CD4-positive, alpha-beta memory T cell (primary cell): ENCODE measurements at regions of chr18 and their contacts with region 1.

Region 1: DNA sequence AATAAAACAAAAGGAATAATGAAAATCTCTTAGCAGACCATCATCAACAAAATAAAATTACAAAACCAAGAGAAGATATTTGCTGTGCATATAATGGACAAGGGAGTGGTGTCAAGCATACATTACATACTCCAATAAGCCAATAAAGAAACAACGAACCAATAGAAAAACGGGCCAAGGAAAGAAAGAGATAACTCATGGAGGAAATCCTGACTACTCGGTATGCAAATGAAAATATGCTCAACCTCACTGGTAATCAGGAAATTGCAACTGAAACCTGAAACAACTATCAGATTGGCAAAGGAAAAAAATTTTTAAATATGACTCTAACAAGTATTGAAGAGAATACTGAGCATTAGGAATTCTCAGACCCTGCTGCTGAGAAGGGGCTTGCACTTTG is 84.7 kb downstream of the BCL2 start:
- DNase-seq: no peak
- H3K4me3 ChIP-seq: no peak overlapping the region
- H3K4me3 Mint-ChIP-seq: peak overlapping the region; percentile 16 to 80 (median 59)
- H3K27ac ChIP-seq: peak overlapping the region; percentile 21
- H3K27ac Mint-ChIP-seq: peak overlapping the region; percentile 53 to 92 (median 84)
- H3K4me1 ChIP-seq: peaks cover 49% of the 10 kb centered on the region
- H3K4me1 Mint-ChIP-seq: peaks cover 53 to 83% (median 67%) of the 10 kb centered on the region in 4 donors
- H3K27me3 ChIP-seq: no peaks in the 10 kb centered on the region
- H3K27me3 Mint-ChIP-seq: no peaks in the 10 kb centered on the region

Region 2: GRCh38 chr18:63253428-63254372 is 18.9 kb after region 1 on chr18:
- CTCF ChIA-PET with region 1: no interaction called
- POLR2A ChIA-PET with region 1: interaction called, 3 read pairs
- intact Hi-C with region 1: loop called (anchors 2 kb)
- DNase-seq: no peak
- H3K4me3 ChIP-seq: no peak overlapping the region
- H3K4me3 Mint-ChIP-seq: peak overlapping the region in 7 of 8 donors; percentile 3 to 83 (median 66)
- H3K27ac ChIP-seq: peak overlapping the region; percentile 4
- H3K27ac Mint-ChIP-seq: peak overlapping the region; percentile 37 to 83 (median 79)
- H3K4me1 ChIP-seq: peaks cover 77% of the 10 kb centered on the region
- H3K4me1 Mint-ChIP-seq: peaks cover 56 to 87% (median 68%) of the 10 kb centered on the region in 4 donors
- H3K27me3 ChIP-seq: no peaks in the 10 kb centered on the region
- H3K27me3 Mint-ChIP-seq: no peaks in the 10 kb centered on the region

Region 3: GRCh38 chr18:63282793-63283192 is 48.0 kb after region 1 on chr18:
- CTCF ChIA-PET with region 1: no interaction called
- POLR2A ChIA-PET with region 1: no interaction called
- intact Hi-C with region 1: no loop called
- DNase-seq: no peak
- H3K4me3 ChIP-seq: no peak overlapping the region
- H3K4me3 Mint-ChIP-seq: no peak overlapping the region
- H3K27ac ChIP-seq: no peak overlapping the region
- H3K27ac Mint-ChIP-seq: no peak overlapping the region
- H3K4me1 ChIP-seq: peaks cover 65% of the 10 kb centered on the region
- H3K4me1 Mint-ChIP-seq: peaks cover 40 to 56% (median 48%) of the 10 kb centered on the region in 4 donors
- H3K27me3 ChIP-seq: no peaks in the 10 kb centered on the region
- H3K27me3 Mint-ChIP-seq: no peaks in the 10 kb centered on the region

Region 4: GRCh38 chr18:63311118-63312018 is 76.5 kb after region 1 on chr18:
- CTCF ChIA-PET with region 1: interaction called, 3 read pairs
- POLR2A ChIA-PET with region 1: interaction called, 12 read pairs
- intact Hi-C with region 1: no loop called
- DNase-seq: no peak
- H3K4me3 ChIP-seq: no peak overlapping the region
- H3K4me3 Mint-ChIP-seq: peak overlapping the region in 7 of 8 donors; percentile 26 to 92 (median 69)
- H3K27ac ChIP-seq: peak overlapping the region; percentile 14
- H3K27ac Mint-ChIP-seq: peak overlapping the region; percentile 51 to 94 (median 80)
- H3K4me1 ChIP-seq: peaks cover 96% of the 10 kb centered on the region
- H3K4me1 Mint-ChIP-seq: peaks cover 61 to 96% (median 82%) of the 10 kb centered on the region in 4 donors
- H3K27me3 ChIP-seq: no peaks in the 10 kb centered on the region
- H3K27me3 Mint-ChIP-seq: no peaks in the 10 kb centered on the region

Region 5: GRCh38 chr18:63363951-63364350 is 129.1 kb after region 1 on chr18:
- CTCF ChIA-PET with region 1: no interaction called
- POLR2A ChIA-PET with region 1: no interaction called
- intact Hi-C with region 1: no loop called
- DNase-seq: peak; percentile 65 to 82 (median 74)
- H3K4me3 ChIP-seq: no peak overlapping the region
- H3K4me3 Mint-ChIP-seq: peak overlapping the region; percentile 3 to 48 (median 6)
- H3K27ac ChIP-seq: no peak overlapping the region
- H3K27ac Mint-ChIP-seq: peak overlapping the region; percentile 11 to 89 (median 48)
- H3K4me1 ChIP-seq: peaks cover 39% of the 10 kb centered on the region
- H3K4me1 Mint-ChIP-seq: peaks cover 28 to 52% (median 39%) of the 10 kb centered on the region in 4 donors
- H3K27me3 ChIP-seq: no peaks in the 10 kb centered on the region
- H3K27me3 Mint-ChIP-seq: no peaks in the 10 kb centered on the region